Common myeloid progenitor, CD34-positive (primary cell): ENCODE measurements at regions of chr20 and their contacts with region 1.

Region 1: DNA sequence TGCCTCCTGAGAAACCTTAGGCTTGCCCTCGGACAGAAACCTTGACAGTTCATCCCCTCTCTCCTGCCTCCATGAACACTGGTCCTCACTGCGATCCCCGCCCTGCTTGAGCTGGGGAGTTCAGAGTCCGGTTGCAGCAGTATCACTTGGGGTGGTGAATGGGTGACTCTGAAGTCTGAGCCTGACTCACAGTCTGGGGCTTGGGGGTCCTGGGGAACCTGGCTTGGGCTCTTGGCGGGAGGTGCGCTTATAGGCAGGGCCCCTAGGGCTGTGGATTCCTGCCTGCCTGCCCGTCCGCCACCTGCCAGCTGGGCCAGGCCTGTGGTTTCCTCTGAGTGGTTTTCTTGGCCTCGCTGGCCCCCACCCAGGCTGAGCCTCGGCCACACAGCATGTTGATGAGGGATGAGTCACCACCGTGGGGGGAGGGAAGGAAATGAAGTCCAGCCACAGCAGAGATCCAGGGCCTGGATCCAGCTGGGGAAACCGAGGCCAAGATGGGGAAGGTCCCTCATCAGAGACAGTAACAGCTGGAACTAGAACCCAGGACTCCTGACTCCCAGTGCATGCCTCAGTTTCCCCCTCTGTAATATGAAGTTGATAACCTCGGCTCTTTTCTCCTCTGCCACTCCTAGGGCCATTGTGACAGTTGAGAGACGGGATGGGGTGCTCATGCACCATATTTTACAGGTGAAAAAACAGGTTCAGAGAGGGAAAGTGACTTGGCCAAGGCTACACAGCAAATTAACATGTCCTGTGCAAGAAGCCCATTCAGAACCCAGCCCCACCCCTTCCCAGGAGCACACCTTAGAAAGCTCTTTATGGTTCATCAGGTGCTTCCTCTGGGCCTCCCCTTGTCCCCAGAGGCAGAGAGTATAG is 9.2 kb downstream of the FOXS1 start:
- DNase-seq: peak; percentile 90 to 98 (median 97)
- H3K4me3 ChIP-seq: peak overlapping the region in 4 of 7 experiments; percentile 14 to 37 (median 26)
- H3K27ac ChIP-seq: no peak overlapping the region
- H3K4me1 ChIP-seq: peaks cover 3 to 59% (median 55%) of the 10 kb centered on the region in 4 experiments
- H3K27me3 ChIP-seq: no peaks in the 10 kb centered on the region

Region 2: DNA sequence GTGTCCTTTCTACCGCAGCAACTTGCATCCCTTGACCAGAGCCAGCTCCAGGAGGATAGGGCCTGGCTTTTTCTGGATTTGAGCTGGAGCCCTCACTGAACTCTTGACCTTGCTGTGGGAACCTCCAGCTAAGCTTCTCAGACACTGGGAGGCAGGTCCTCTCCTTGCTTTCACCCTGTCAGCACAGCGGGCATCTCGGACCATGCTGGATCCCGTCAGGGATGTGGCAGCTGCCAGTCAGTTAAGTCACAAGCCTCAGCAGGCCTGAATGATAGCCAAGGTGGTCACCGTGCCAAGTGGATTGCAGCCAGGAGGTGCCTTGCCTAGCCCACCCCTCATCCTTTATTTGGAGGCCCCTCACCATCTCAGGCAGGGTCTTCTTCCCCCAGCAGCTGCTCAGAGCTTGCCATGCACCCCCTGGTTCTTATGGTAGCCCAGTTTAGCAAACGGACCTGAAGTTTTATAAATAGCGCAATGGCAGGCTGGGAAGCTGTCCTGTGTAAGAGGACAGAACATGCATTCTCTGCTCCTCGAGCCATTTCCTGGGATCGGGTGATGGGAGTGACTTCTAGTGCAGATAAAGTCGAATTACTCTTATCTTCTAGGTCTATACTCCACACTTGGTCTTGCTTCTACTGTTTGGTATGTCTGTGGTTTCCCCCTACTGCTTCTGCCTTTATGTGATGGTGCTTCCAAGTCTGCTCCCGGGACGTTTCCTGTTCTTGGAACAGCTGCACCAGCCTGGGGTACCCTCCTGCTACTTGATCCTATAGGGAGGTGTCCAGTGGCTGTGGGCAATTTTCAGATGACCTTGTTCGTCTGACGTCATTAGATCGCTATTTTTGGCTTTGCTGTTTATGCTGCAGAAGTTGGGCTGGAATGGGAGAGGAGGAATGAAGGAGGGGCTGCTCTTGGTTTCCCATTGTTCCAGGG is 24.2 kb before region 1 on chr20:
- CTCF ChIA-PET with region 1: interaction called, 12 read pairs
- POLR2A ChIA-PET with region 1: no interaction called
- DNase-seq: peak in 1 of 3 donors; percentile 13
- H3K4me3 ChIP-seq: no peak overlapping the region
- H3K27ac ChIP-seq: no peak overlapping the region
- H3K4me1 ChIP-seq: peaks cover 0 to 15% (median 10%) of the 10 kb centered on the region in 4 experiments
- H3K27me3 ChIP-seq: no peaks in the 10 kb centered on the region

Region 3: DNA sequence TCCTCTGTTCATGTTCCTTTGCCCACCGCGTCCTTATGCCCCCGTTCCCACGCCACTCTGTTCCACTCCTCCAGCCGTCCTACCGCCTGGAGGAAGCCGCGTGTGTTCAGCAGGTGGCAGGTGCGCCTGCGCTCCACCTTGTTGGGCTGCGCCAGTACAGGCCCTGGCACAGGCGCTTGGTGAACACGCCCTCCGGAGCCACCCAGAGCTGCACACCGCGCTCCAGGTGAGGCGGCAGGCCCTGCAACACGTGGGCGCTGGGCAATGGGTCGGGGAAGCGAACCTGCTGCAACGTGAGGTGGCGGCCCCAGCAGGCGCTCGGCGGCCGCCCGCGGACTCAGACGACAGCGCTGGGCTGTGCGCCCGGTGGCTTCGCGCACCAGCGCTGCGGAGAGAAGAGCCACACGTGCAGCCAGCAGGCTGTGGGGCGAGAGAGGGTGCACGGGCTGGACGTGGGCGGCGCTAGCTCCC is 13.3 kb after region 1 on chr20:
- CTCF ChIA-PET with region 1: interaction called, 42 read pairs
- POLR2A ChIA-PET with region 1: no interaction called
- DNase-seq: no peak
- H3K4me3 ChIP-seq: no peak overlapping the region
- H3K27ac ChIP-seq: no peak overlapping the region
- H3K4me1 ChIP-seq: peaks cover 0 to 3% (median 1%) of the 10 kb centered on the region in 4 experiments
- H3K27me3 ChIP-seq: peaks cover 0 to 32% (median 11%) of the 10 kb centered on the region in 5 experiments

Region 4: GRCh38 chr20:31881945-31882344 is 45.7 kb after region 1 on chr20:
- CTCF ChIA-PET with region 1: no interaction called
- POLR2A ChIA-PET with region 1: no interaction called
- DNase-seq: no peak
- H3K4me3 ChIP-seq: no peak overlapping the region
- H3K27ac ChIP-seq: no peak overlapping the region
- H3K4me1 ChIP-seq: peaks cover 0 to 10% (median 5%) of the 10 kb centered on the region in 4 experiments
- H3K27me3 ChIP-seq: peaks cover 0 to 2% (median 0%) of the 10 kb centered on the region in 5 experiments